Endothelial cell of umbilical vein (primary cell): ENCODE measurements at regions of chr1 and their contacts with region 1.

Region 1: DNA sequence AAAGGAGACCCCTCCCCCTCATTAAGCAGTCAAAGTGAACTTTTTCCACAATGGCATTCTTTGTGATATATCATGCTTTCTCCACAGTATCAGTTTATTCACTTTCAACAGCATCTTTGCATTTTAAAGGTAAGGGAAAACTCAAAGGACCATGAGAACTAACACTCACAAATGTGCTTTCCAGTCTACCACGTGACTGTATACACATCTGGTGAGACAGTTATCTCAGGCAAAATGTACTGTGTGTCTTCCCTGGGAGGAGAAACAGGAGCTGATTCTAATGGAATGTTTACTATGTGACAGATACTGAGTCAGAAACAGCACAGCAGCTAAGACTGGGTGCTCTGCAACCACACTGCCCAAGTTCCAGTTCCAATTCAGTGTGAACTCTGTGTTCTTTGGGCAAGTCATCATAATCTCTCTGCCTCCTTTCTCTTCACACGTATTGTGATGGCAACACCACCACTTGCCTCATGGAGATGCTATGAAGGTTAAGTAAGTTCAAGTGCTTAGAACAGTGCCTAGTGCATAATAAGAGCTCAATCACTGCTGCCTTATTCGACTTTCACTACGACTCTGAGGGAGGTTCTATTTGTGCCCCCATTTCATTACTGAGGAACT is 79.0 kb downstream of the SLC45A1 start:
- DNase-seq: peak; percentile 71
- H3K4me3 ChIP-seq: no peak overlapping the region
- H3K27ac ChIP-seq: peak overlapping the region; percentile 62
- H3K4me1 ChIP-seq: peaks cover 49% of the 10 kb centered on the region
- H3K27me3 ChIP-seq: no peaks in the 10 kb centered on the region
- CTCF ChIP-seq: no peak
- POLR2A ChIP-seq: no peak

Region 2: DNA sequence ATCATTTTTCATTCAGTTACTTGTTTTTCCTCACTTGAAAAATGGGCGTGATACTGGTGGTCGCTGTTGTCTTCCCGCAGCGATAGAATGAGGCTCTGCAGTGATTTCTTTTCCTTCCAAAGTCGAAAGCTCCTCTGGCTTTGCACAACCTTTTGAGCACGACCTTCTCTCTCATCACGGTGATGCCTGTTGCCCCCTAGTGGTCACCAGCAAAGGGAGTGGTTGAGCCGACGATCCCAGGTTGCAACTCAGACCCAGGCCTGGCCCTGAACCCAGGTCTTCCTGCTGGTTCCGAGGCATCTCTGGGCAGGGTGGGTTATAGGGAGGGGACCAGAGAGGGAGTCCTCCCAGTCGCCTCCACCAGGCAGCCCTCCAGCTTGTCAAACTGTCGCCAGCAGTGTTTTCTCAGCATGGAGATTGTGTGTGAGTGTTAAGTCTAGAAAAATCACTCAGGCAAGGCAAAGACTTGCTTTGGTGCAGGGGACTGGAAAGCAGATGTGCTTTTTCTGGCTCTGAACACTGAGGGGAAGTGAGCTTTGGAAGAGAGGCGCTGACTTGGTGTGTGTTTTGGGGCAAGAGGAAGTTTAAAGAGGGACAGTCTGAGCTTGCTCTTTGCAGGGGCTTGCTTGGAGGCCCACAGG is 1326.4 kb before region 1 on chr1:
- CTCF ChIA-PET with region 1: no interaction called
- POLR2A ChIA-PET with region 1: no interaction called
- dilution Hi-C with region 1: no loop called
- intact Hi-C with region 1: no loop called
- DNase-seq: peak; percentile 69
- H3K4me3 ChIP-seq: peak overlapping the region in 2 of 3 experiments; percentile 16 to 20
- H3K27ac ChIP-seq: no peak overlapping the region
- H3K4me1 ChIP-seq: peaks cover 4% of the 10 kb centered on the region
- H3K27me3 ChIP-seq: no peaks in the 10 kb centered on the region
- CTCF ChIP-seq: peak; percentile 73 to 95
- POLR2A ChIP-seq: no peak

Region 3: DNA sequence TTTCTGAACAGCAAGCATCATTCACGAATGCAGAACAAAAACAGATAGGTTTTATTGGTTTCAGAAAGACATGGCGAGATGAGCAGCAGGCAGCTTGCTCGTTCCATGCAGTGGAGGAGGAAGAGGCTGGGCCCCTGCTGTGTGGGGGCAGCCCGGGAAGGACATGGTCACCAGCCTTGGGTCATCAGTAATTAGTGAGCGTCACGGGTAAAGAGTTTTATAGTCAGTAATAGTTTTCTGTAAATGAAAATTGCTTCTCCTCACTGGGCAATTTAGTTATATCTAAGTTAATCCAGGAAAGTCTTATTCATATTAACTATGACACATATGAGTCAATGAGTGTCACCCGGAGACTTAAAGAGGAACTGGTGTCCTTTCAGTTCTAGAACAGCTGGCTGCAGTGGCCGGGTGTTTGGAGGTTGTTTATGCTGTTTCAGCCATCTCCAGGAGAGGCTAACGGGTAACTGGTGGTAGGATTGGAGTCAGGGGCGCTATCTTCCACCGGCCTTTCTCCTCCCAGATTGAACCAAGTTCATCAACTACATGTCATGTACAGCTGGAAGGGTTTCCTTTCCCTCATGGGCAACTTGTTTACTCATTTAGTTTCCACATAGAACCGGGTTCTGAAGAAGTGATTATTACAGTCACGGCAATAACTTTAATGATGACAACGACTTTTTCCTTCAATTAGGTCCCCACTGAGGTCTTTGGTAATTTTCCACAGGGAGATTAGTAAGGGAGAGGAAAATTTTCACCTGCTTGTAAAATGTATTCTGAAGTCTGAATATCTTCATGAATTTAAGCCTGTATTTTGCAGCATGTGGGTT is 113.6 kb before region 1 on chr1:
- CTCF ChIA-PET with region 1: no interaction called
- POLR2A ChIA-PET with region 1: no interaction called
- dilution Hi-C with region 1: no loop called
- intact Hi-C with region 1: no loop called
- DNase-seq: no peak
- H3K4me3 ChIP-seq: no peak overlapping the region
- H3K27ac ChIP-seq: no peak overlapping the region
- H3K4me1 ChIP-seq: no peaks in the 10 kb centered on the region
- H3K27me3 ChIP-seq: peaks cover 0 to 2% of the 10 kb centered on the region in 2 experiments
- CTCF ChIP-seq: no peak
- POLR2A ChIP-seq: no peak

Region 4: GRCh38 chr1:8374812-8375211 is 22.1 kb before region 1 on chr1:
- CTCF ChIA-PET with region 1: interaction called, 4 read pairs
- POLR2A ChIA-PET with region 1: no interaction called
- dilution Hi-C with region 1: no loop called
- intact Hi-C with region 1: loop called (anchors 1 kb)
- DNase-seq: peak; percentile 55
- H3K4me3 ChIP-seq: no peak overlapping the region
- H3K27ac ChIP-seq: no peak overlapping the region
- H3K4me1 ChIP-seq: peaks cover 24% of the 10 kb centered on the region
- H3K27me3 ChIP-seq: no peaks in the 10 kb centered on the region
- CTCF ChIP-seq: peak; percentile 28 to 47
- POLR2A ChIP-seq: no peak

Region 5: DNA sequence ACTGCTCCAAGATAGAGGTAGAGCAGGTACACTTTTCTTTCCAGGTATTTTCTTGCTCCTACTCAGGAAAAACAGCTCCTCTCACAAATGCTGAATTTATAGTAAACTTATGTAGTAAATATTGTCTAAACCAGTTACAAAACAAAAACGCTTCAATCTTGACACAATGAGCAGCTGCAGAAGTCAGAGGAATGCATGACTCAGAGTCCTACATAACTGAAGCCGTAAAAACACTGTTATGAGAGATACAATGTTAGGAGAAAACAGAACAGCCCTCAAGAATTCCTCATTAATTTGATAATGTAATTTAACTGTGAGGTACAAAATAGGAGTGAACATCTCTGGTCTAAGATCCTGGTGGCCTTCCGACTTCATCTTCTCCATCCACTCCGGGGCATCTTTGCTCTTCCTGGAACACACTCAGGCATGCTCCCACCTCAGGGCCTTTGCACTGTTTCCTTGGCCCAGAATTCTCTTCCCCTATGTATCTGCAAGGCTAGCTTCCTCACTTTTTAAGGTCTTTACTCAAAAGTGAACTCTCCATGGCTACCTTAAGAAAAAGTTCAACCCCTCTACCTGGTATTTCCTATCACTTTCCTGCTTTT is 59.5 kb after region 1 on chr1:
- CTCF ChIA-PET with region 1: no interaction called
- POLR2A ChIA-PET with region 1: no interaction called
- dilution Hi-C with region 1: no loop called
- intact Hi-C with region 1: loop called (anchors 2 kb)
- DNase-seq: peak; percentile 78
- H3K4me3 ChIP-seq: no peak overlapping the region
- H3K27ac ChIP-seq: peak overlapping the region; percentile 67
- H3K4me1 ChIP-seq: peaks cover 31% of the 10 kb centered on the region
- H3K27me3 ChIP-seq: no peaks in the 10 kb centered on the region
- CTCF ChIP-seq: no peak
- POLR2A ChIP-seq: no peak